ENCODE measurements at regions of chr10 and their contacts with region 1.

Region 1: GRCh38 chr10:74262856-74263255 is 111.8 kb downstream of the ADK start:
- DNase-seq: no peak
- ATAC-seq: no peak
- H3K4me3 ChIP-seq: no peak overlapping the region
- H3K27ac ChIP-seq: no peak overlapping the region
- H3K4me1 ChIP-seq: no peaks in the 10 kb centered on the region
- H3K27me3 ChIP-seq: no peaks in the 10 kb centered on the region
- CTCF ChIP-seq: no peak

Region 2: DNA sequence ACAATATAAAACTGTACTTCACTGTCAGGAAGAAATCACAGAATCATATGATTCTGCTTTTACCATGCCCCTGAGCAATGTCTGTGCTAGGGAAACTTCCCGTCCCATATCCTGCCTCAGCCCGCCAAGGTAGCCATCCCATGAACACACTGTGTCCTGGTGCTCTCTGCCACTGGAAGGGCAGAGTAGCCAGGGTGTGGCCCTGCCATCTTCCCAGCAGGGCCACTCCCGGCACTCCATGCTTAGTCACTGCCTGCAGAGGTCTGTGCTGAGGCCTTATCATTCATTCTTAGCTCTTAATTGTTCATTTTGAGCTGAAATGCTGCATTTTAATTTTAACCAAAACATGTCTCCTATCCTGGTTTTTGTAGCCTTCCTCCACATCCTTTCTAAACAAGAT is 144.1 kb before region 1 on chr10:
- intact Hi-C with region 1: no loop called
- DNase-seq: no peak
- ATAC-seq: peak in 1 of 2 donors; percentile 44
- H3K4me3 ChIP-seq: no peak overlapping the region
- H3K27ac ChIP-seq: peak overlapping the region; percentile 18
- H3K4me1 ChIP-seq: peaks cover 4% of the 10 kb centered on the region
- H3K27me3 ChIP-seq: no peaks in the 10 kb centered on the region
- CTCF ChIP-seq: no peak

Region 3: GRCh38 chr10:75099952-75100763 is 837.3 kb after region 1 on chr10:
- intact Hi-C with region 1: loop called (anchors 10 kb)
- DNase-seq: peak; percentile 86
- ATAC-seq: peak; percentile 92 to 93
- H3K4me3 ChIP-seq: no peak overlapping the region
- H3K27ac ChIP-seq: no peak overlapping the region
- H3K4me1 ChIP-seq: peaks cover 11% of the 10 kb centered on the region
- H3K27me3 ChIP-seq: no peaks in the 10 kb centered on the region
- CTCF ChIP-seq: peak; percentile 99

Measured in lower lobe of right lung (tissue), 2 donors.